Activated T-helper 1 cell treated with anti-CD3 and anti-CD28 coated beads, Interleukin-12 subunit alpha, Interleukin-12 subunit beta, Interleukin-2, Interleukin-4 antibody, amounts not matched to agents 30 ng/mL and 10 ng/mL and 1 ng/mL, durations not matched to agents 14 hours and 24 hours and 36 hours (primary cell): ENCODE measurements at regions of chr13 and their contacts with region 1.

Region 1: DNA sequence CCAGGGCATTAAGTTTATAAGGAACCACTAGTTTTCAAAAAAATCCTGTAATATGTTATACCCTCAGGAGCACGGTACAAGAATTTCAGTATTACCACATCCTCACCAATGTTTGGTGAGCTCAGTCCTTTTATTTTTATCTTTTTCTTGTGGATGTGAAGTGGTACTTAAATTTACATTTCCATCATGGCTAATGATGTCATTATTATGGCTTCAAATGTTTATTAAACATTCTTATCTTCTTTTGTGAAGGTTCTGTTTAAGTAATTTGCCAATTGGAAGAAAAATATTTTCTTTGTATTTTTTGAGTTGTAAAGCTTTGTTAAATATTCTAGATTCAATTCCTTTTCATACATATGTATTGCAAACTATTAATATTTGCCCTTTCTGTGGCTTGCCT is 291.0 kb downstream of the ENOX1 start:
- DNase-seq: no peak
- H3K4me3 Mint-ChIP-seq: no peak overlapping the region
- H3K27ac Mint-ChIP-seq: no peak overlapping the region
- H3K4me1 Mint-ChIP-seq: no peaks in the 10 kb centered on the region
- H3K27me3 Mint-ChIP-seq: no peaks in the 10 kb centered on the region

Region 2: GRCh38 chr13:42728507-42729180 is 767.1 kb before region 1 on chr13:
- intact Hi-C with region 1: no loop called
- DNase-seq: no peak
- H3K4me3 Mint-ChIP-seq: no peak overlapping the region
- H3K27ac Mint-ChIP-seq: no peak overlapping the region
- H3K4me1 Mint-ChIP-seq: no peaks in the 10 kb centered on the region
- H3K27me3 Mint-ChIP-seq: peaks cover 18% of the 10 kb centered on the region

Region 3: DNA sequence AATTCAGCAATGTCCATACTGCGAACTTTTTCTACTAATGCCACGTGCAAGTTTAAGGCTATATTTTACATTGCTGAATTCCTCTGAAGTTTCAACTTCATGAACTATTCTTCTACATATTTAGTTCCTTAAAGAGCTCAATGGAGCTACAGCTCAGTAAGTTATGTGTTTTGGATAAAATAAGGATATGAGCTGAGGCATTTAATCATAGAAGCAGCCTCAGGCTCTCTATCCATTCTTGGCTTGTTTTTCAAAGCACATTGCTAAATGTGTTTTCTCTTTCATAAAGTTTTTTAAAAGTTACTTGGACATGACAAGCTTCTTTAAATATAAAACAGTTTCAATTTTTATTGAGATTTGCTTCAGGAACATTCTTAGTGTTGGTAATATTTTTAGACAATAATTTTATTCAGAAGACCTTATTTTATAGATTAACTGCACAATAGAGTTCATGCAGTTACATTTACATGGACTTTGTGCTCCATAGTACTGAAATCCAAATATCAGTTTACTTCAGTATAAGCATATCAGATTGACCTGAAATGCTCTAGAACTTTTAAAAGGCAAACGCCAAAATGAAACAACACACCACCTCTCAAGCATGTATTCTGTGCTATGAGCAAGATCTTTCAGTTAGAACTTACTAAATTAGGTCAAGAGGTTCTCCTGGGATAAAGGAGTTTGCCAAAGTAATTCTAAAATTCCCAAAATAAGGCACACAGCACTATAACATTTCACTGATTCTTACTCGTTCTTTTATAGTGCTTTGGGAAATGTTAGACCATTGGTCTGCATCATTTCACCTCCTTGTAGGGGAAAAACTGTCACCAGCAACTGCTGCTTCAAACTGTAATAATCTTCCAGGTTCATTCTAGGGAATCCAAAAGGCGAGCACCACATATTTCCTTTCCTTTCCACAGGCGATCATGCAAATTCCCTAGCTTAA is 15.5 kb after region 1 on chr13:
- intact Hi-C with region 1: loop called (anchors 1 kb)
- DNase-seq: no peak
- H3K4me3 Mint-ChIP-seq: no peak overlapping the region
- H3K27ac Mint-ChIP-seq: no peak overlapping the region
- H3K4me1 Mint-ChIP-seq: no peaks in the 10 kb centered on the region
- H3K27me3 Mint-ChIP-seq: peaks cover 6% of the 10 kb centered on the region